ENCODE measurements at regions of chr16 and their contacts with region 1.

Region 1: GRCh38 chr16:81932668-81933067 is 78.6 kb downstream of the SDR42E1 start:
- DNase-seq: peak; percentile 14
- H3K4me3 ChIP-seq: no peak overlapping the region
- H3K27ac ChIP-seq: no peak overlapping the region
- H3K4me1 ChIP-seq: no peaks in the 10 kb centered on the region
- H3K27me3 ChIP-seq: no peaks in the 10 kb centered on the region
- CTCF ChIP-seq: peak in 1 of 2 donors; percentile 37
- POLR2A ChIP-seq: no peak

Region 2: DNA sequence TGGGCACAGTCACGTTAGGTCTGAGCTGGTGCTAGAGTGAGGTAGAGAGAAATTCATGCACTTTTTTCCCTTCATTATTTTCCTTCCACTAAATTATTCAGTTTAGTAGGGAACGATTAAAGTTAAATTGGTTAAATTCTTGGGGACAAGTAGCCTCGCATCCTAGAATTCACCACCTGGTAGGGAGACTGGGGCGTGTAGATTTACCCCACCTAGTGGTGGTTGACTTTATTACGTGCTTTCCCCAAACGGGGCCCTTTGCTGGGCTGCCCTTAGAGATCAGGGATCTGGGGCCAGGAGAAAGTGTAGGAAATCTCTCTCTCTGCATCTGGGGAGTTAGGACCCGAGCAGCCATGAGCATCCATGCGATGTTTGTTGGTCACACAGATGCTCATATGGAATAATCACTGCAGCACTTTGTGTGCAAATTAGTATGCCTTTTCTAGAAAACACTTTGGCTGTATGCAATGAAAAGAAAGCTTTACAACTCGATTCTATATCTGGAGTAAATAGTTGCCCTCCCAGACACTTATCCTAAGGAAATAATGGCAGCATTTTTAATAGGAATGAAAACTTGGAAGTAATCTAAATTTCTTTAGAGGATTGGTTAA is 46.6 kb before region 1 on chr16:
- CTCF ChIA-PET with region 1: interaction called, 37 read pairs
- POLR2A ChIA-PET with region 1: no interaction called
- dilution Hi-C with region 1: no loop called
- intact Hi-C with region 1: loop called (anchors 1 kb)
- DNase-seq: peak; percentile 40
- H3K4me3 ChIP-seq: no peak overlapping the region
- H3K27ac ChIP-seq: no peak overlapping the region
- H3K4me1 ChIP-seq: no peaks in the 10 kb centered on the region
- H3K27me3 ChIP-seq: no peaks in the 10 kb centered on the region
- CTCF ChIP-seq: peak; percentile 73 to 78
- POLR2A ChIP-seq: no peak